ENCODE measurements at regions of chr16 and their contacts with region 1.

Region 1: DNA sequence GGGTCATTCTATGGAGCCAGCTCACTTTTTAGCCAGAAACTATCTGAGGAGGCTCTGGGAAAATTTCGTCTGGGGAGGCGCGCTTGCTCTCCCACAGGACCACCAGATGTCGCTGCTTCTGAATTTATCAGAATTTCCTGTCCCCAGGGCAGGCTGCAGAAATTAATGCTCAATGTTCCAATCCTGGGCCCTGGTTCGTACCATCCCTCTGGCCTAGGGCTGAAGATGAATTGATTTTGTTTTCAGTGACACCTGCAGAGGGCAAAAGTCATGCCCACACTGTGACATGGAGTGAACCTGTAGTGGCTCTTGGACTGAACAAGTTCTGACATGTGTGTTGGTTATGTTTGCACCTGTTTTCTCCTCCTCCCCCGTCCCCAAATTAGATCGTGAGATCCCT is 482.6 kb downstream of the NPIPA7 start:
- DNase-seq: peak in 9 of 10 donors; percentile 26 to 92 (median 66)

Region 2: GRCh38 chr16:17238284-17239028 is 376.9 kb after region 1 on chr16:
- intact Hi-C with region 1: loop called (anchors 5 kb)
- DNase-seq: no peak